ENCODE measurements at regions of chr16 and their contacts with region 1.

Region 1: GRCh38 chr16:28166394-28167208 is 45.2 kb downstream of the XPO6 start:
- DNase-seq: peak; percentile 13
- ATAC-seq: peak; percentile 62
- H3K4me3 ChIP-seq: no peak overlapping the region
- H3K27ac ChIP-seq: 0 out of 2 replicates have a peak overlapping the region, but pooled peaks have one; percentile 15
- H3K4me1 ChIP-seq: peaks cover 0 to 11% of the 10 kb centered on the region in 2 experiments; a peak in 2 of 4 replicates
- H3K27me3 ChIP-seq: no peaks in the 10 kb centered on the region
- CTCF ChIP-seq: no peak
- POLR2A ChIP-seq: no peak
- RAD21 ChIP-seq: 0 out of 2 replicates have a peak, but pooled peaks have one; percentile 10

Region 2: DNA sequence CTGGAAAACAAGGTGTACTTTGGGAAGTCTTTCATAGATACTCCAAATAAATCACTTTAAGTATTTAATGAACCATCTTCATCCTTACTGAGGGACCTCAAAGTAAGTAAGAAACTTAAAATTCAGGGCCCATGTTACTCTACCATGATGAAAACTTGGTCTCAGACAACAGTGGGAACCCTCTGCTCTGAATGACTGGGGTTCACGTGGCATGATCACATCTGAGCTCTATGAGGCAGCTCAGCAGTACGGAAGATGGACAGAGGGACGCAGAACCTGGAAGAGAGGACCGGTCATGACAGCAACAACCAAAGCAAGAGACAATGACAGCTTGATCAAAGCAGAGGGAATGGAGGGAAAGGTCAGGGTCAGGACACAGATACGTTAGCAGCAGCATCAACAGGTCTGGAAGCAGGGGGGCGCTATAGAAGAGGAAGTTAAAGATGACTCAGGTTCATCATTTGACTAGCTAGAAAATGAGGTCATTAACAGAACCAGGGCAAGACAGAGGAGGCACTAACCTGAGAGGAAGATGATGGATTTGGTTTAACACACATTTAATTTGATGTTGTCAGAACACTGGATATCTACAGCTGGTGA is 35.6 kb after region 1 on chr16:
- CTCF ChIA-PET with region 1: no interaction called
- POLR2A ChIA-PET with region 1: no interaction called
- RAD21 ChIA-PET with region 1: no interaction called
- intact Hi-C with region 1: loop called (anchors 5 kb)
- DNase-seq: no peak
- ATAC-seq: no peak
- H3K4me3 ChIP-seq: no peak overlapping the region
- H3K27ac ChIP-seq: no peak overlapping the region
- H3K4me1 ChIP-seq: peaks cover 0 to 7% of the 10 kb centered on the region in 2 experiments; a peak in 2 of 4 replicates
- H3K27me3 ChIP-seq: no peaks in the 10 kb centered on the region
- CTCF ChIP-seq: peak in 1 of 3 experiments; percentile 45; a peak in 2 of 6 replicates
- POLR2A ChIP-seq: no peak
- RAD21 ChIP-seq: no peak